Ascending aorta (tissue), 2 donors: ENCODE measurements at regions of chr9 and their contacts with region 1.

Region 1: GRCh38 chr9:134024828-134025605 is at the start of gene BRD3OS:
- DNase-seq: peak; percentile 86 to 98
- H3K4me3 ChIP-seq: peak within 1 kb of the TSS; percentile 70 to 97
- H3K27ac ChIP-seq: peak within 1 kb of the TSS; percentile 45 to 68
- H3K4me1 ChIP-seq: peaks cover 0 to 3% of the 10 kb centered on the region in 2 donors
- H3K27me3 ChIP-seq: no peaks in the 10 kb centered on the region
- CTCF ChIP-seq: no peak
- total RNA-seq, gene BRD3OS: 15.9 TPM

Region 2: DNA sequence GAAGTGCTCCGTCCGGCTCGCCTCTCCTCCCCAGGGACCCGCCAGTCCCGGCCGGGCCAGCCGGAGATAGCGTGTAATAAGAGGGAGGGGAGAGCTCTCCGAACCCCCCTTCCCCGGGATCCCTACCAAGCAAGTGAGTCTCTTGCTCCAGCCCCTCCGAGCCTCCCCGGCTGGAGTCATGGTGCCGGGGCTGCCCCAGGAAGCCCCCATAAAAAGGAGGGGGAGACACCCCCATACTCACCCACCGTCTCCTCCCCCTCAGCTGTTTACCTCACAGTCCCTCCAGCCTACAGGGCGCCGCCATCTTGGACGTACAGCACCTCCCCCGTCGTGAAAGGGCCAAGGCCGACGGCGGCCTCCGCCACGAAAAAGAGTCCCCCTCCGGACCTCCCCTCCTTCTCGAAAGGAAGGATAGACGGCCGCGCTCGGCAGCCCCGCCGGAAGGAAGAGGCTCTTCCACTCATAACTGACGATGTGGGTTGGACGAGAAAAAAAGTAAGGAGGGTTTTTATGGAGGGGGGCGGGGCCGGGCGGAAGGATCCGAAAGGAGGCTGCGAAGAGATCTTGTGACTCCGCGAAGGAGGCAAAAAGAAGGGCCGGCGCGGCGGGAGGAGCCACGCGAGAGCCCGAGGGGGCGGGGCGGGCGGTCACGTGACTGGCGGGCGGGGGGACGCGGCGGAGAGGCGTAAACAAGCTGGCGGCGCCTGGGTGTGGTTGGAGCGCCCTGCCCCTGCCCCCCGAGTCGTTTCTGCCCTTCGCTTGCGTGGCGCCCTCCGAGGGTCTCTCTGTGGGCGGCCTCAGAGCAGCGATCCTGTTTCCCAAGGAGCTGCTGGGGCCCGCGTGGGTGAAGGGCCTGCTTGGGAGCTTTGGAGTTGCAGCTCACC is 1080.5 kb before region 1 on chr9 and contains the start of gene TSC1:
- intact Hi-C with region 1: loop called (anchors 10 kb)
- DNase-seq: peak; percentile 76 to 97
- H3K4me3 ChIP-seq: peak within 1 kb of the TSS; percentile 69 to 82
- H3K27ac ChIP-seq: peak within 1 kb of the TSS; percentile 94 to 96
- H3K4me1 ChIP-seq: peaks cover 0 to 14% of the 10 kb centered on the region in 2 donors
- H3K27me3 ChIP-seq: no peaks in the 10 kb centered on the region
- CTCF ChIP-seq: no peak
- total RNA-seq, gene TSC1: 39.8 TPM

Region 3: DNA sequence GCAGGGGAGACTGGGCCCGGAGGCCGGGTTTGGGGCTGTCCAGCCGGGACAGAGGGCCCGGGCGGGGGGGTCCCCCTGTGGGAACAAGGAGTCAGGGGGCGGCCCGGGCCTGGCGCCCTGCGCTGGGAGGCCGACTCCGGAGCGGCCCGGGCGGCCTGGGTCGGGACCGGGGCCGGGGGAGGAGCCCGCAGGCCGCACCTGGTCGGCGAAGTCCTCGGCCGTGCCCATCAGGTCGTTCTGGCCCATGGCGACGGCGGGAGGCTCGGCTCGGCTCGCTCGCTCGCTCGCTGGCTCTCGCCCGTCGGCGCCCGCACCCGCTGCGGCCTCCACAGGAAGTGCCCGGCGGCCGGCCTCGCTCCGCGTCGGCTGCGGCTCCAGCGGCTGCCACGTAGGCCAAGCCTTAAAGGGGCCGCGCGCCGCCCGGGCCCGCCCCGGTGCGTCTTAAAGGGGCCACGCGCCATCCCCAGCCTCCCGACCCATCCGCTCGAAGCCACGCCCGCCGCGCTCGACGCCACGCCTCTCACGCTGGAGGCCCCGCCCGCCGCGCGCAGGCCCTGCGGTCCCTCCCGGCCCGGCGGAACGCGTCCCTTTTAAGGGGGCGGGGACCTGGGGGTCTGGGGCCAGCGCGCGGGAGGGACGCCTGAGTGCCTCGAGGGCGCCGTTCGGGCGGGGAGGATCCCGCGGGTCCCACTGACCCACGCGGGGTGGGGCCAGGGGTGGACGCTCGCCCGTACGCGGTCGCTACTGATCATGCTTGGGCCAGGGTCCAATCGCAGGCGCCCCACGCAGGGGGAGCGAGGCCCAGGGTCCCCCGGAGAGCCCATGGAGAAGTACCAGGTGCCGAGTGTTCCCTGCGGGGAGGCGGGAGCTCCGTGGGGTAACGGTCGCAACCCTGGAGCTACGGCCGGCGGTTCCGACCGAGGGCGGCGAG is 649.0 kb before region 1 on chr9 and contains the starts of genes STKLD1 and SURF4:
- intact Hi-C with region 1: loop called (anchors 10 kb)
- DNase-seq: peak; percentile 75 to 98
- H3K4me3 ChIP-seq: peak within 1 kb of the TSS; percentile 97 to 98
- H3K27ac ChIP-seq: peak within 1 kb of the TSS; percentile 94 to 97
- H3K4me1 ChIP-seq: peaks cover 7 to 26% of the 10 kb centered on the region in 2 donors
- H3K27me3 ChIP-seq: no peaks in the 10 kb centered on the region
- CTCF ChIP-seq: peak in 1 of 3 experiments; percentile 18
- total RNA-seq, gene STKLD1: not detected
- total RNA-seq, gene SURF4: 161 TPM

Region 4: GRCh38 chr9:133992780-133993634 is 32.0 kb before region 1 on chr9:
- intact Hi-C with region 1: loop called (anchors 1 kb)
- DNase-seq: peak; percentile 44 to 92
- H3K4me3 ChIP-seq: peak overlapping the region; percentile 63 to 95
- H3K27ac ChIP-seq: peak overlapping the region; percentile 72 to 87
- H3K4me1 ChIP-seq: peaks cover 0 to 23% of the 10 kb centered on the region in 2 donors
- H3K27me3 ChIP-seq: no peaks in the 10 kb centered on the region
- CTCF ChIP-seq: peak; percentile 15 to 52 (median 44)

Region 5: GRCh38 chr9:134135343-134136118 is 110.5 kb after region 1 on chr9 and contains the start of gene WDR5:
- intact Hi-C with region 1: loop called (anchors 1 kb)
- DNase-seq: peak; percentile 57 to 93
- H3K4me3 ChIP-seq: peak within 1 kb of the TSS; percentile 90 to 96
- H3K27ac ChIP-seq: peak within 1 kb of the TSS; percentile 76 to 82
- H3K4me1 ChIP-seq: peaks cover 11 to 39% of the 10 kb centered on the region in 2 donors
- H3K27me3 ChIP-seq: no peaks in the 10 kb centered on the region
- CTCF ChIP-seq: peak in 1 of 3 experiments; percentile 12
- total RNA-seq, gene WDR5: 13.9 TPM

Region 6: DNA sequence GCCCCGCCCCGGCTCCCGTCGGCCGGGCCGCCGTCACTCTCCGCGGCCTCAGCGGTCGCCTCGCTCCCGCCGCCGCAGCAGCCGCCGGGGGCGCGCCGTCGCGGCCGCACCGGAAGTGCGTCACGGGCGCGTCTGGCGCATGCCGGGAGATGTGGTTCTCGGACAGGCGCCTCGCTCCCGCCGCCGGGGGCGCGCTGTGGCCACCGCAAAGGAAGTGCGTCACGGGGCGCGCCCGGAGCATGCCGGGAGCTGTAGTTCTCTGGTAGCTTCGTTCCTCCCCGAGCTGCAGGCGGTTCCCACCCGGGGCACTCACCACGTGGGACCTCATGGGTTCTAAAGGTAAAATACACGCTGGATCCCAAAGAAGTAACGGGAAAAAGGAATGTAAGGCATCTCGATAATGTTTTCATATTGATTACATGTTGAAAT is 1936.3 kb after region 1 on chr9 and contains the start of gene UBAC1:
- intact Hi-C with region 1: loop called (anchors 2 kb)
- DNase-seq: peak; percentile 86 to 98
- H3K4me3 ChIP-seq: peak within 1 kb of the TSS; percentile 67 to 96
- H3K27ac ChIP-seq: peak within 1 kb of the TSS; percentile 73 to 91
- H3K4me1 ChIP-seq: peaks cover 3 to 12% of the 10 kb centered on the region in 2 donors
- H3K27me3 ChIP-seq: no peaks in the 10 kb centered on the region
- CTCF ChIP-seq: peak in 2 of 3 experiments; percentile 13 to 70
- total RNA-seq, gene UBAC1: 31.0 TPM